ENCODE measurements at regions of chr2 and their contacts with region 1.

Region 1: DNA sequence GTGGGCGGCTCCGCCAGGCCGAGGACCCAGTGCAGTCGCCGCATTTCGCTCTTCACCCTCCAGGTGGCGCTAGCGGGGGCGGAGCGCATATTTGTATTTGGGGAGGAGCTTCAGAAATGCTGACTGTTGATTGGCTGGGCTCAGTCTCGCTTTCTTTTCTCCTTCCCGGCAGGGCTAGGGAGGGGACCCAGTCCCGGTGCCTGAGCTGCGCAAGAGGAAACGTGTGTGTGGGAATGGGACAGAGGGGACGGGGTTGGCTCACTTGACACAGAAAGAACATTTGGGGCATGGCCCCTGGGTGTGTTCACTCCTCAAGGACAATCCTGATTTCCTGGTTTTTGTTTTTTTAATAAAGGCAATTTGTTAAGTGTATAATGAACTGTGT is 20.3 kb upstream of the DNMT3A start:
- DNase-seq: peak; percentile 94

Region 2: DNA sequence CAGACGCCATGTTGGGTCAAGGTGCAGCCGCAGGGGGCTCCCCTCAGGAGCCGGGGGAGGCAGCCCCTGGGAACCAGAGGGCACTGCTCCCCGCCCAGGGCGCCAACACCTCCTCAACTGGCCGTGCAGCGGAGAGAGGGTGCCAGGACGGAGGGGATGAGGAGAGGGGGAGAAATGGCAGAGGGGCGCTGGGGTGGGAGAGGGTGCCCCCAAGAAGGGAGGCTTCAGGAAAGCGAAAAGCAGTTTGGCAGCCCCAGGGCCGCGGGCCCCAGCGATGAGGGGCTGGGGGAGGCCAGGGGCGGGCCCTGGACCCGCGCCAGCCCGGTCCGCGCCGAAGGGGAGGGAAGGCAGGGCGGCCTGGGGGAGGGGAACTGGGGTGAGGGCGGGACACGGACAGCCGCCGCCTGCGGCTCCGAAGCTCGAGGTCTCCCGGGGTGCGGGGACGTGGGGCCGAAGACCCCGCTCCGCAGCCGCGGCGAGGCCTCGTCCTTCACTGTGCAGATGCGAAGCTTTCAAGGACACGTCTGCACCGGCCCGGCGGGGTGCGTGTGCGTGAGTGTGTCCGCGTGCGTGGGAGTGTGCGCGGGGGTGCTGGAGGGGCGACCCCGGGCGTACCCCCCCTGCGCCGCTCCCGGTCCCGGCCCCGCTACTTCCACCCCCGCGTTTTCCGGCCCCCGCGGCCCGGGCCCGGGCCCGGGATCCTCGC is 21.7 kb before region 1 on chr2:
- CTCF ChIA-PET with region 1: interaction called, 10 read pairs
- POLR2A ChIA-PET with region 1: no interaction called
- DNase-seq: no peak

Region 3: GRCh38 chr2:25347205-25347815 is 14.7 kb before region 1 on chr2:
- CTCF ChIA-PET with region 1: interaction called, 17 read pairs
- POLR2A ChIA-PET with region 1: interaction called, 4 read pairs
- DNase-seq: no peak

Region 4: GRCh38 chr2:25376750-25377621 is 14.9 kb after region 1 on chr2:
- CTCF ChIA-PET with region 1: interaction called, 15 read pairs
- POLR2A ChIA-PET with region 1: interaction called, 6 read pairs
- DNase-seq: peak; percentile 95

Region 5: DNA sequence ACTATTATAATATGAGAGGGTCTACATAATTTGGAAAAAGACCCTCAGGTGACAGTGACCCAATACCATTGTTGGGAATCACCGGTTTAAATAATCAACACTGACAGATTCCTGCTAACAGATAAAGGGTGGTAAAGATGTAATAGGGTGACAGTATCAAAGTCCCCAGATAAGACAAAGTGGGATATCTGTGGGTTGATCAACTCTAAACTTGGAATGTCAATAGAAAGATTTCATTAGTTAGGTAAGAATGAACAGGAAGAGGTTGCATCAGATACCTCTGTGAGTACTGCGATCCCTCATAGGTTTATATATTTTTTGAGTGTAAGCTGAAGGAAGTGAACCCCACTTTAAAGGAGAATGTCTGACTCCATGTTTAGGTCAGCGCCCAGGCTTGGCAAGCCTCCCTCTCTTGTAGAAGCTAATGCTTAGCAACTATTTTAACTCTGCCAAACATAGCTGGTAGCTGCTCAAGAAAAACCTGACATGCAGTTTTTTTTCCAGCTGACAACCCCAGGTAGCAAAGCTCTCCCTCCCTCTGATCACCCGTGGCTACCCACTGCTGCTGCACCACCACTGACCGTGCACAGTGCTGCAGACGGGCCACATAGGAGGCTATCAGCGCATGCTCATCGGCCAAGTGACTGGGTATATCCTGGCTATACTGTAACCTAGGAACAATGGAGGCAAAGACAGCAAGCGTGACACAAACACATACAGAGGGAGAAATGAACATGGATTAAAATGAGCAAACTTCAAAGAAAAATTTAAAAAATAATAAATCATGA is 93.0 kb after region 1 on chr2:
- CTCF ChIA-PET with region 1: no interaction called
- POLR2A ChIA-PET with region 1: no interaction called
- DNase-seq: no peak